Mammary epithelial cell (primary cell): ENCODE measurements at regions of chr1 and their contacts with region 1.

Region 1: GRCh38 chr1:203504397-203505250 is 10.7 kb downstream of the OPTC start:
- DNase-seq: peak; percentile 68
- H3K4me3 ChIP-seq: no peak overlapping the region
- H3K27ac ChIP-seq: no peak overlapping the region
- H3K4me1 ChIP-seq: no peaks in the 10 kb centered on the region
- H3K27me3 ChIP-seq: no peaks in the 10 kb centered on the region
- CTCF ChIP-seq: peak; percentile 64 to 71

Region 2: GRCh38 chr1:203368624-203369451 is 135.8 kb before region 1 on chr1:
- CTCF ChIA-PET with region 1: no interaction called
- dilution Hi-C with region 1: no loop called
- in situ Hi-C with region 1: no loop called
- intact Hi-C with region 1: loop called (anchors 1 kb)
- DNase-seq: peak; percentile 81
- H3K4me3 ChIP-seq: no peak overlapping the region
- H3K27ac ChIP-seq: no peak overlapping the region
- H3K4me1 ChIP-seq: peaks cover 14% of the 10 kb centered on the region
- H3K27me3 ChIP-seq: no peaks in the 10 kb centered on the region
- CTCF ChIP-seq: peak; percentile 53 to 66

Region 3: GRCh38 chr1:203558064-203558760 is 53.6 kb after region 1 on chr1:
- CTCF ChIA-PET with region 1: no interaction called
- dilution Hi-C with region 1: no loop called
- in situ Hi-C with region 1: no loop called
- intact Hi-C with region 1: loop called (anchors 2 kb)
- DNase-seq: peak; percentile 97
- H3K4me3 ChIP-seq: no peak overlapping the region
- H3K27ac ChIP-seq: peak overlapping the region; percentile 50
- H3K4me1 ChIP-seq: peaks cover 40% of the 10 kb centered on the region
- H3K27me3 ChIP-seq: no peaks in the 10 kb centered on the region
- CTCF ChIP-seq: no peak

Region 4: DNA sequence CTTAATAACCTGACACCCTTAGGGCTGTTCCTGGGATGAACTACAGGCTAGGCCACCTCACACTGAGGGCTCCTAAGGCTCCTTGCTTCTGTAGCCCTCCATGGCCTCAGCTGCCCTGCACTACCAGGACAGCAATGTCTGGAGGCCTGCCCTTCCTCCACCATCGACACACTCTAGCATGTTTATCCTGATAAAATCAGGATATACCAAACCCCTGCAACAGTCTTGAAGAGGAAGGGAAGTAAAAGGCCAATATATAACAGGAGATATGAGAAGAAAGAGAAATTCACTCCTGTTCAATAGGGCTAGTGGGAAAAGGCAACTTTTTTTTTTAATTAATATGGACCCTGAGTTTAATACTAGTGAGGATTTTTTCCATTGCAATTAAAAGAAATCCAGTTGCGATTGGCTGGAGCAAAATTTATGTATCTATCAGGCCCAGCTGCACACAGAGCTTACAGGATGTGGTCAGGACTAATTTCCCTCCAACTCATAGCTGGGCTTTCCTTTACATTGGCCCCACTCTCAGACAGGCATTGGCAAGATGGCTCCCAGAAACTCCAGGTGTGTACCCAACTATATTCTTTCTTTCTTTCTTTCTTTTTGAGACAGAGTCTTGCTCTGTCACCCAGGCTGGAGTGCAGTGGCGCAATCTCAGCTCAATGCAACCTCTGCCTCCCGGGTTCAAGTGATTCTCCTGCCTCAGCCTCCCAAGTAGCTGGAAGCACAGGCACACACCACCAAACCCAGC is 108.5 kb after region 1 on chr1:
- CTCF ChIA-PET with region 1: no interaction called
- dilution Hi-C with region 1: no loop called
- in situ Hi-C with region 1: loop called in 1 of 2 experiments (anchors 10 kb)
- intact Hi-C with region 1: no loop called
- DNase-seq: no peak
- H3K4me3 ChIP-seq: no peak overlapping the region
- H3K27ac ChIP-seq: no peak overlapping the region
- H3K4me1 ChIP-seq: no peaks in the 10 kb centered on the region
- H3K27me3 ChIP-seq: no peaks in the 10 kb centered on the region
- CTCF ChIP-seq: no peak

Region 5: DNA sequence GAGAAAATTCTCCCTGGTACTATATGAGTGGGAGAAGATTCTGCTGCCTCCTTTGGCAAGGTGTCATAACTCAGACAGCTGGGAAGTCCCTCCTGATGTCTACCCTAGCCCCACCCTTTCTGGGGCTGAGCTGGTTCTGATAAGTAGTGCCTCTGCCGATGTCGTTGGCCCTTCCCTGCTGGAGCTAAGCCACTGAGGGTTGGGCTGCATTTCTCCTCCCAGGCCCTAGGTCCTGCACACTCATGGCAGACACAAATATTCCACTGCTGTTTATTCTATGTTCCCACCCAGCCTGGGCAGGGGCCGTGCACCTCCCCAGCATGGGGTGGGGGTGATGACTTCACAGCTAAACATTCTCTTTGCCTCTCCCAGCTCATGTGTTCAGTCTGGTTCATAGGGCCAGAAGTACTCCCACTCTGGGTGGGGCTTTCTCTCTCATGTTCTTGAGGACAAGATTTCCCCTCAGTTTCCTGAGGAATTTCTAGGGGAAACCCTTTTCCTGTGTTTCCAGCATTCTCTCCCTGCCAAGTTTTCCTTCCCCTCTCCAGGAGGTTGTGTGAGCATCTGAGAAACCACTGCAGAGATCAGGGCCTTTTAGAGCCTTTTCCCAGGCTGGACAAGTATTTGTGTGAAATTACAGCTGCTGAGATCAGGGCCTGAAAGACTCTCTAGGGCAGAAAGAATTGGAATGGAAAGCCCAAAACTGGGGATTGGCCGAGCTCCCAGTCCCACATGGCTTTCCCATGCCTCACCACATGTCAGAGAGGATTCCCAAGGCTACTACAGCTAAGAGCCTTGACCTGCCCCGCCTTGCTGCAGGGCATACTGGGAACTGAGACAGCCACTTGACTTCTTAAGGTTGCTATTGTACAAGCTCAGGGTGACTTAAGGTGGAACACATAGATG is 188.2 kb after region 1 on chr1:
- CTCF ChIA-PET with region 1: interaction called, 4 read pairs
- dilution Hi-C with region 1: no loop called
- in situ Hi-C with region 1: no loop called
- intact Hi-C with region 1: loop called (anchors 2 kb)
- DNase-seq: peak; percentile 97
- H3K4me3 ChIP-seq: no peak overlapping the region
- H3K27ac ChIP-seq: peak overlapping the region; percentile 97
- H3K4me1 ChIP-seq: peaks cover 28% of the 10 kb centered on the region
- H3K27me3 ChIP-seq: no peaks in the 10 kb centered on the region
- CTCF ChIP-seq: no peak

Region 6: GRCh38 chr1:203776636-203777035 is 272.0 kb after region 1 on chr1:
- CTCF ChIA-PET with region 1: no interaction called
- dilution Hi-C with region 1: no loop called
- in situ Hi-C with region 1: no loop called
- intact Hi-C with region 1: loop called (anchors 1 kb)
- DNase-seq: no peak
- H3K4me3 ChIP-seq: no peak overlapping the region
- H3K27ac ChIP-seq: no peak overlapping the region
- H3K4me1 ChIP-seq: no peaks in the 10 kb centered on the region
- H3K27me3 ChIP-seq: no peaks in the 10 kb centered on the region
- CTCF ChIP-seq: peak; percentile 4 to 48

Region 7: GRCh38 chr1:203807196-203807595 is 302.6 kb after region 1 on chr1:
- CTCF ChIA-PET with region 1: no interaction called
- dilution Hi-C with region 1: no loop called
- in situ Hi-C with region 1: loop called in 1 of 2 experiments (anchors 25 kb)
- intact Hi-C with region 1: no loop called
- DNase-seq: no peak
- H3K4me3 ChIP-seq: no peak overlapping the region
- H3K27ac ChIP-seq: no peak overlapping the region
- H3K4me1 ChIP-seq: no peaks in the 10 kb centered on the region
- H3K27me3 ChIP-seq: no peaks in the 10 kb centered on the region
- CTCF ChIP-seq: no peak